ENCODE measurements at regions of chr1 and their contacts with region 1.

Region 1: GRCh38 chr1:15603050-15603965 is 13.9 kb upstream of the DDI2 start:
- DNase-seq: peak; percentile 87 to 94
- H3K4me3 ChIP-seq: peak overlapping the region; percentile 98
- H3K27ac ChIP-seq: peak overlapping the region; percentile 63
- H3K4me1 ChIP-seq: 0 out of 2 replicates have a peak, but pooled peaks cover 10% of the 10 kb centered on the region
- H3K27me3 ChIP-seq: no peaks in the 10 kb centered on the region
- CTCF ChIP-seq: no peak

Region 2: GRCh38 chr1:15559294-15559761 is 44.0 kb before region 1 on chr1:
- CTCF ChIA-PET with region 1: no interaction called
- POLR2A ChIA-PET with region 1: no interaction called
- intact Hi-C with region 1: no loop called
- DNase-seq: peak; percentile 44 to 89
- H3K4me3 ChIP-seq: peak overlapping the region; percentile 41; the same call in 1 of the 2 replicates
- H3K27ac ChIP-seq: peak overlapping the region; percentile 99
- H3K4me1 ChIP-seq: peaks cover 36% of the 10 kb centered on the region
- H3K27me3 ChIP-seq: no peaks in the 10 kb centered on the region
- CTCF ChIP-seq: no peak

Region 3: GRCh38 chr1:15592285-15592684 is 11.0 kb before region 1 on chr1:
- CTCF ChIA-PET with region 1: interaction called, 11 read pairs
- POLR2A ChIA-PET with region 1: no interaction called
- intact Hi-C with region 1: no loop called
- DNase-seq: no peak
- H3K4me3 ChIP-seq: no peak overlapping the region
- H3K27ac ChIP-seq: no peak overlapping the region
- H3K4me1 ChIP-seq: no peaks in the 10 kb centered on the region
- H3K27me3 ChIP-seq: no peaks in the 10 kb centered on the region
- CTCF ChIP-seq: no peak

Region 4: GRCh38 chr1:15741183-15741850 is 138.0 kb after region 1 on chr1:
- CTCF ChIA-PET with region 1: interaction called, 10 read pairs
- POLR2A ChIA-PET with region 1: no interaction called
- intact Hi-C with region 1: loop called (anchors 5 kb)
- DNase-seq: peak; percentile 63 to 88
- H3K4me3 ChIP-seq: no peak overlapping the region
- H3K27ac ChIP-seq: no peak overlapping the region
- H3K4me1 ChIP-seq: no peaks in the 10 kb centered on the region
- H3K27me3 ChIP-seq: no peaks in the 10 kb centered on the region
- CTCF ChIP-seq: peak; percentile 82

Region 5: DNA sequence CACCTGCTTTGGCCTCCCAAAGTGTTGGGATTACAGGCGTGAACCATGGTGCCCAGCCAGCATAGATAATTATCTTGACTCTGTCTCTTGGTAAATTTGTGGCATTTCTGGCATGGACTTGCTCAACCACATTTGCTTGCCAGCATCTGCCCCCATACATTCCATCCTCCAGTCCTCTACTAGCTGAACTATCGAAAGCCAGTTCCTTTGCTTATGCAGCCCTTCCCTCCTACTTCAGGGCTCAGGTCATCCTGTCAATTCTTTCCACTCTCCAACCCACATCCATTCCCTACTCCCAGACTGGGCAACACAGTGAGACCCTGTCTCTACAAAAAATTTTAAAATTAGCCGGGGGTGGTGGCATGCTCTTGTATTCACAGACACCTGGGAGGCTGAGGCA is 217.2 kb after region 1 on chr1:
- CTCF ChIA-PET with region 1: no interaction called
- POLR2A ChIA-PET with region 1: interaction called, 23 read pairs
- intact Hi-C with region 1: no loop called
- DNase-seq: peak; percentile 64 to 75
- H3K4me3 ChIP-seq: no peak overlapping the region
- H3K27ac ChIP-seq: 0 out of 2 replicates have a peak overlapping the region, but pooled peaks have one; percentile 19
- H3K4me1 ChIP-seq: no peaks in the 10 kb centered on the region
- H3K27me3 ChIP-seq: no peaks in the 10 kb centered on the region
- CTCF ChIP-seq: no peak

Measured in PC-9 (cell line).